ENCODE measurements at regions of chr14 and their contacts with region 1.

Region 1: GRCh38 chr14:70816525-70816924 is 7.2 kb upstream of the MAP3K9 start:
- DNase-seq: no peak
- ATAC-seq: no peak
- H3K4me3 ChIP-seq: no peak overlapping the region
- H3K27ac ChIP-seq: no peak overlapping the region
- H3K4me1 ChIP-seq: no peaks in the 10 kb centered on the region
- H3K27me3 ChIP-seq: no peaks in the 10 kb centered on the region

Region 2: GRCh38 chr14:70972107-70972976 is 155.8 kb after region 1 on chr14:
- intact Hi-C with region 1: loop called in 3 of 4 experiments (anchors 2 to 5 kb)
- DNase-seq: peak; percentile 72 to 89 (median 75)
- ATAC-seq: peak; percentile 79 to 88
- H3K4me3 ChIP-seq: no peak overlapping the region
- H3K27ac ChIP-seq: no peak overlapping the region
- H3K4me1 ChIP-seq: no peaks in the 10 kb centered on the region
- H3K27me3 ChIP-seq: no peaks in the 10 kb centered on the region

Region 3: DNA sequence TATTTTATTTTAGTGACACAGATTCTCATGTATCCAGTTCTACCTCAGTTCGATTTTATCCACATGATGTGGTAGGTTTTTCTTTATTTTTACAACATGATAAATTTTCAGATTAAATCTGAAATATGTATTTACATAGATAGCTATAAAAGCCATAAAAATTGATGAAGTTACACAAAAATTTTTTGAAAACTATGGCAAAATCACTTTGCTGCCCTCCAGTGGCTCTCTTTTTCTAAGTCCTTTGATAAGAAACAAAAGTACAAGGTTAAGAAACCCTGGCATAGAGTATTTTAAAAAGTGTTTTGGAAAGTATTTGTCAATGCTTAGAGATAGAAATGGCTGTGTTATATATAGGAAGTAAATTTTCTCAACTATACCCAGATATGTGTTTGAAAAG is 195.0 kb after region 1 on chr14:
- intact Hi-C with region 1: no loop called
- DNase-seq: no peak
- ATAC-seq: no peak
- H3K4me3 ChIP-seq: no peak overlapping the region
- H3K27ac ChIP-seq: no peak overlapping the region
- H3K4me1 ChIP-seq: peaks cover 2% of the 10 kb centered on the region
- H3K27me3 ChIP-seq: no peaks in the 10 kb centered on the region